ENCODE measurements at regions of chr22 and their contacts with region 1.

Region 1: DNA sequence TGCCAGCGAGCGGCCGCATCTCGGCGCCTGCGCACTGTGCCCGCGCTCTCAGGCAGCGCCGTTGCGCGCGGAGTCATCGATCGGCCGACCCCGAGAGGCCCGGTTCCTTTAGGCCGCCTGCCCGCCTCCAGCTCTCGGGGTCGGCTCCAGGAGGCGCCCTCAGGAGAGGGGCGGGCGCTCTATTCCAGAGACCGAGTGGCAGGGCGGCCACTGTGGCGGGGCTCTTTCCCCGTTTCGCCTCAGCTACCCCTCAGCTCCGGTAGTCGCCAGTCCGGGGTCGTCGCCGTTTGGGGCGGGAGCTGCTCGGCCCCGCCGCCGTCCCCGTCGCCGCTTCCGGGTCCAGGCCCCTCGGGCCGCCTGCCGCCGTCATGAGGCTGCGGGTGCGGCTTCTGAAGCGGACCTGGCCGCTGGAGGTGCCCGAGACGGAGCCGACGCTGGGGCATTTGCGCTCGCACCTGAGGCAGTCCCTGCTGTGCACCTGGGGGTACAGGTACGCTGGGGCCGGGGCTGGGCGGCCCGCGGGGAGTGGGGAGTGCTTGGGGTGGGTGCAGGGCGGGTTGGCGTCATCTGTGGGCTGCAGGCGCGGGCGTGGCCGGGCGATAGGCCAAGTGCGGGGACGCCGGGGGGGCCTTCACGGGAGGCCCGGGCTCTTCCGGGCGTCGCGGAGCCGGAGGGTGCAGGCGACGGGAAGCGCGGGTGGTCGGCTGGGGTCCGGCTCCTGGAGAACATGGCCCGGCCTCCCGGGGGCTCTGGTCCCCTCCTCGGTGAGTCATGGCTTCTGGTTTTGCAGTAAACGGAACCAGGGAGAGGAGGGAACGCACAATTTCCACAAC is at the start of gene FBXO7:
- DNase-seq: peak; percentile 84
- H3K4me3 Mint-ChIP-seq: peak within 1 kb of the TSS; percentile 93
- H3K27ac Mint-ChIP-seq: peak within 1 kb of the TSS; percentile 93
- H3K4me1 Mint-ChIP-seq: peaks cover 21% of the 10 kb centered on the region
- H3K27me3 Mint-ChIP-seq: no peaks in the 10 kb centered on the region
- total RNA-seq, gene FBXO7: 104 and 106 TPM in 2 replicates

Region 2: GRCh38 chr22:31977141-31977841 is 497.6 kb before region 1 on chr22:
- intact Hi-C with region 1: loop called (anchors 1 kb)
- DNase-seq: peak; percentile 62
- H3K4me3 Mint-ChIP-seq: no peak overlapping the region
- H3K27ac Mint-ChIP-seq: no peak overlapping the region
- H3K4me1 Mint-ChIP-seq: peaks cover 7% of the 10 kb centered on the region
- H3K27me3 Mint-ChIP-seq: peaks cover 9% of the 10 kb centered on the region

Region 3: GRCh38 chr22:32144496-32145274 is 330.2 kb before region 1 on chr22:
- intact Hi-C with region 1: loop called (anchors 2 kb)
- DNase-seq: no peak
- H3K4me3 Mint-ChIP-seq: no peak overlapping the region
- H3K27ac Mint-ChIP-seq: no peak overlapping the region
- H3K4me1 Mint-ChIP-seq: peaks cover 40% of the 10 kb centered on the region
- H3K27me3 Mint-ChIP-seq: peaks cover 3% of the 10 kb centered on the region

Region 4: GRCh38 chr22:32202539-32203180 is 272.2 kb before region 1 on chr22:
- intact Hi-C with region 1: loop called (anchors 5 kb)
- DNase-seq: no peak
- H3K4me3 Mint-ChIP-seq: peak overlapping the region; percentile 26
- H3K27ac Mint-ChIP-seq: no peak overlapping the region
- H3K4me1 Mint-ChIP-seq: peaks cover 17% of the 10 kb centered on the region
- H3K27me3 Mint-ChIP-seq: peaks cover 13% of the 10 kb centered on the region

Region 5: DNA sequence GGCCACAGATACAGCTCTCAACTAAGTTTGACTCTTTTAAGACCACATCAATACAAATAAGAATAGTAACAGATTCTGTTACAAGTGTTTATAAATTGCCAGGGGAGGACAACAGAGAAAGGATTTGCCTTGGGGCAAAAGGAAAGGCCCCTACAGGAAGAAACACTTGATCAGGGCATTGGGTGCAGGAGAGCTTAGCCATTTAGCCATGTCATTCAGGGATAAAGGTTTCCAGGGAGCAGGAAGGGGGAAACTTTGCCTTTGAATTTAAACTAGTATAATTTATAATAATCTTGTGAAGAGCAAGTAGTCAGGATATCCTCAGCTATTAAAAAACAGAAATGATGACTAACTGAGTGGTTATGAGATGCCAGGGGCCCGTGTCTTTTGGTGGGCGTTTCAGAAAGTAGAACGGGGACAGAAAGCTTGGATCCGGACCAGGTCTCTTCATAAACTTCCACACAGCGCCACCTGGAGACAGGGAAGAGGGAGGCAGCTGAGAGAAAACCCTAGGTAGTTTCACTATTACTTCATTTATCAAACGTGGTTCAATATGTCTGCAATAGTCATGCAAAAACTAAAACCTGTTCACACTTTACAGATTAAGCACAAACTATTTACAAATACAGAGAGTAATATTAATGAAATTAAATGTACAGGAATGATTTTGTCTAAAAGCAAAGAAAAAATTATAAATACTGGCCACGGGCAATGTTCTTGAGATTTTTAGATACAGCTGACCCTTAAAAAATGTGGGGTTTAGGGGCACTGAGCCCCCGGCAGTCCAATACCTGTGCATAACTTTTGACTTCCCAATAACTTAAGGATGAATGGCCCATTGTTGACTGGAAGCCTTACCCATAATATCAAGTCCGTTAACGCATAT is 208.7 kb before region 1 on chr22:
- intact Hi-C with region 1: loop called (anchors 10 kb)
- DNase-seq: peak; percentile 55
- H3K4me3 Mint-ChIP-seq: no peak overlapping the region
- H3K27ac Mint-ChIP-seq: no peak overlapping the region
- H3K4me1 Mint-ChIP-seq: peaks cover 6% of the 10 kb centered on the region
- H3K27me3 Mint-ChIP-seq: no peaks in the 10 kb centered on the region

Region 6: GRCh38 chr22:32411829-32412592 is 62.8 kb before region 1 on chr22 and contains the start of gene RTCB:
- intact Hi-C with region 1: loop called (anchors 1 kb)
- DNase-seq: peak; percentile 88
- H3K4me3 Mint-ChIP-seq: peak within 1 kb of the TSS; percentile 98
- H3K27ac Mint-ChIP-seq: peak within 1 kb of the TSS; percentile 97
- H3K4me1 Mint-ChIP-seq: peaks cover 53% of the 10 kb centered on the region
- H3K27me3 Mint-ChIP-seq: peaks cover 3% of the 10 kb centered on the region
- total RNA-seq, gene RTCB: 97.5 and 102 TPM in 2 replicates